Activated CD4-positive, alpha-beta T cell treated with anti-CD3 and anti-CD28 coated beads for 36 hours (primary cell): ENCODE measurements at regions of chr9 and their contacts with region 1.

Region 1: DNA sequence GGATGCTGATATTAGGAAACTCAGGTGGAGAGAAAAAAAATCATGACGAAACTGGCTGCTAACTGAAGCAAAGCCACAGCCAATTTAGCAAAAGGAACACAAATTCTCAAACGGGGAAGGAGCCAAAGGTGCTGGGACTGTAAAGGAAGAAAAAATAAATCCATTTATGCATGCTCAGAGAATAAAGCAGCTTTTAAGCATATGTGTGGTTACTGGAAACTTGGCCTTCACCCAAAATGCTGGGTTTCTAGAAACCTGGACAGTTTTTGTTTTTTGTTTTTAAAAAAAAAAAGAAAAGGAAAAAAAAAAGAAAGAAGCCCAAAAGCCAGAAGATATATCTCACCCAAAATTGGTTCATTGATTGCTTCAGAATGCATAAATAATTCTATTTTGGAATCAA is 8.0 kb downstream of the WHRN start:
- DNase-seq: no peak
- ATAC-seq: no peak
- H3K4me3 Mint-ChIP-seq: no peak overlapping the region
- H3K27ac Mint-ChIP-seq: no peak overlapping the region
- H3K4me1 Mint-ChIP-seq: peaks cover 16% of the 10 kb centered on the region
- H3K27me3 Mint-ChIP-seq: no peaks in the 10 kb centered on the region

Region 2: GRCh38 chr9:114207034-114207810 is 290.0 kb before region 1 on chr9:
- CTCF ChIA-PET with region 1: no interaction called
- POLR2A ChIA-PET with region 1: no interaction called
- intact Hi-C with region 1: no loop called
- DNase-seq: no peak
- ATAC-seq: no peak
- H3K4me3 Mint-ChIP-seq: no peak overlapping the region
- H3K27ac Mint-ChIP-seq: no peak overlapping the region
- H3K4me1 Mint-ChIP-seq: no peaks in the 10 kb centered on the region
- H3K27me3 Mint-ChIP-seq: no peaks in the 10 kb centered on the region

Region 3: GRCh38 chr9:114339130-114339908 is 157.9 kb before region 1 on chr9:
- CTCF ChIA-PET with region 1: interaction called, 3 read pairs
- POLR2A ChIA-PET with region 1: no interaction called
- intact Hi-C with region 1: loop called (anchors 5 to 10 kb)
- DNase-seq: peak; percentile 74
- ATAC-seq: peak; percentile 71
- H3K4me3 Mint-ChIP-seq: no peak overlapping the region
- H3K27ac Mint-ChIP-seq: peak overlapping the region; percentile 51
- H3K4me1 Mint-ChIP-seq: peaks cover 3% of the 10 kb centered on the region
- H3K27me3 Mint-ChIP-seq: no peaks in the 10 kb centered on the region

Region 4: GRCh38 chr9:114372921-114373448 is 124.3 kb before region 1 on chr9:
- CTCF ChIA-PET with region 1: no interaction called
- POLR2A ChIA-PET with region 1: no interaction called
- intact Hi-C with region 1: no loop called
- DNase-seq: peak; percentile 91
- ATAC-seq: peak; percentile 85
- H3K4me3 Mint-ChIP-seq: peak overlapping the region; percentile 64
- H3K27ac Mint-ChIP-seq: peak overlapping the region; percentile 89
- H3K4me1 Mint-ChIP-seq: peaks cover 84% of the 10 kb centered on the region
- H3K27me3 Mint-ChIP-seq: no peaks in the 10 kb centered on the region

Region 5: DNA sequence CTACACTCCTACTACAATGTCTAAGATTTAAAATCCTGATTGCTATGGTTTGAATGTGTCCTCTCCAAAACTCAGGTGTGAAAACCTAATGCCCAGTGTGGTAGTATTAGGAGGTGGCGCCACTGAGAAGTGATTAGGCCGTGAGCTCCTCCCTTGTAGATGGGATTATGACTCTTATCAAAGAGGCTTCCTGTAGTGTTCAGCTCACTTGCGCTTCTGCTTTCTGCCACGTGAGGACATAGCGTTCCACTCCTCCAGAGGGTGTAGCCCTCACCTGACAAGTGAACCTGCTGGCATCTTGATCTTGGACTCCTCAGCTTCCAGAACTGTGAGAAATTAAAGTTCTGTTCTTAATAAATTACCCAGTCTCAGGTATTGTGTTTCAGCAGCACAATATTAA is 41.0 kb after region 1 on chr9:
- CTCF ChIA-PET with region 1: no interaction called
- POLR2A ChIA-PET with region 1: no interaction called
- intact Hi-C with region 1: no loop called
- DNase-seq: peak; percentile 43
- ATAC-seq: peak; percentile 95
- H3K4me3 Mint-ChIP-seq: no peak overlapping the region
- H3K27ac Mint-ChIP-seq: no peak overlapping the region
- H3K4me1 Mint-ChIP-seq: peaks cover 4% of the 10 kb centered on the region
- H3K27me3 Mint-ChIP-seq: no peaks in the 10 kb centered on the region